Activated CD4-positive, alpha-beta memory T cell treated with anti-CD3 and anti-CD28 coated beads, Interleukin-2, amount 10 ng/mL, durations not matched to agents 7 days and 5 days (primary cell): ENCODE measurements at regions of chr3 and their contacts with region 1.

Region 1: GRCh38 chr3:187745201-187746058 is at the start of gene BCL6:
- DNase-seq: peak; percentile 91
- H3K4me3 Mint-ChIP-seq: peak within 1 kb of the TSS; percentile 89
- H3K27ac Mint-ChIP-seq: peak within 1 kb of the TSS; percentile 99
- H3K4me1 Mint-ChIP-seq: peaks cover 56% of the 10 kb centered on the region
- H3K27me3 Mint-ChIP-seq: no peaks in the 10 kb centered on the region
- total RNA-seq, gene BCL6: 30.4 to 33.4 TPM

Region 2: GRCh38 chr3:187594272-187594671 is 151.2 kb before region 1 on chr3:
- CTCF ChIA-PET with region 1: no interaction called
- POLR2A ChIA-PET with region 1: no interaction called
- DNase-seq: no peak
- H3K4me3 Mint-ChIP-seq: no peak overlapping the region
- H3K27ac Mint-ChIP-seq: no peak overlapping the region
- H3K4me1 Mint-ChIP-seq: no peaks in the 10 kb centered on the region
- H3K27me3 Mint-ChIP-seq: peaks cover 36% of the 10 kb centered on the region

Region 3: GRCh38 chr3:187640569-187641059 is 104.8 kb before region 1 on chr3:
- CTCF ChIA-PET with region 1: no interaction called
- POLR2A ChIA-PET with region 1: no interaction called
- DNase-seq: no peak
- H3K4me3 Mint-ChIP-seq: no peak overlapping the region
- H3K27ac Mint-ChIP-seq: no peak overlapping the region
- H3K4me1 Mint-ChIP-seq: no peaks in the 10 kb centered on the region
- H3K27me3 Mint-ChIP-seq: peaks cover 19% of the 10 kb centered on the region

Region 4: DNA sequence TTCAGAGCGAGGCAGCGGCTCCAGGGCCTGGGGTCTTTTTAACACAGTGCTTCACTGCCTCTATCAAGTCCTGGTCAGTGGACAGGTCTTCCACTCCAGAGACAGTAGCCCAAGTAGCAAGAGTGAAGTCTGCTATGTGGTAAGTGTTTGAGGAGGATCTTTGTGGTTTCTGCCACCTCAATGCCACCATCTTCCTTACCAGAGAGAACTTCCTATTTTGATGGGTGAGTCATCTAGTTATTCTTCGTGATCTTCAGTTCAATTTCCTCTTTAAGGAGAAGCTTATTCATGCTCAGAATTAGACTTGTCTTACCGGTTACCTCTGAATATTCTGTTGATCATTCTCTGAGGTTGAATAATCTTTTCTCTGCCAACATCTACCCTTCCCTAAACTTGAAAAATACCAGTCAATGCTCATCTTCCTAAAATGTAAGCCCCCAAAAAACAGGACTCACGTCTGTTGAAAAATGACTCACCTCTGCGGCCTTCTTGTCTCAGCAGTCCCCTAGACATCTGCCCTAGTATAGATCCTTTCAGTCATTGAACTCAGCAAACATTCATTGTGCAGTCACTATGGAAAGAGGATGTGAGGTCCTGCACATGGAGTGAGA is 32.0 kb after region 1 on chr3:
- CTCF ChIA-PET with region 1: interaction called, 8 read pairs
- POLR2A ChIA-PET with region 1: interaction called, 28 read pairs
- DNase-seq: peak; percentile 75
- H3K4me3 Mint-ChIP-seq: peak overlapping the region; percentile 55
- H3K27ac Mint-ChIP-seq: peak overlapping the region; percentile 95
- H3K4me1 Mint-ChIP-seq: peaks cover 58% of the 10 kb centered on the region
- H3K27me3 Mint-ChIP-seq: no peaks in the 10 kb centered on the region

Region 5: DNA sequence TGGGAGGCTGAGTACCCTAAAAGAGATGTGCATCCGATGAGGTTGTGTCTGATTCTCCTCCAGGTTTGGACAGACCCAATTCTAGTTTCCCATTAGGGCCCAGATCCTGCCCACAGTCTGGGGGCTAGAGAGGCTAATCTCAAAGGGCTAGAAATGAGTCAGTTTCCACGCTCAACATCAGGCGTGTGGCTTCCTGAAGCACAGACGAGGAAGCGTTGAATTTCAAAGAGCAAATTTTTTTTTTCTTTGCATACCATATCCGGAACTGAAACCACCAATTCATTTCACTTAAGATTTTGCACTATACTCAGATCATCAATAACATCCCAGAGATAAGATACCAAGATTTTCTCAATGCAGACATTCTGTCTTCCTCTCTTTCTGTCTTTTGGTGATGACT is 173.6 kb after region 1 on chr3:
- CTCF ChIA-PET with region 1: interaction called, 5 read pairs
- POLR2A ChIA-PET with region 1: interaction called, 11 read pairs
- DNase-seq: peak; percentile 76
- H3K4me3 Mint-ChIP-seq: peak overlapping the region; percentile 61
- H3K27ac Mint-ChIP-seq: peak overlapping the region; percentile 84
- H3K4me1 Mint-ChIP-seq: peaks cover 66% of the 10 kb centered on the region
- H3K27me3 Mint-ChIP-seq: peaks cover 17% of the 10 kb centered on the region

Region 6: DNA sequence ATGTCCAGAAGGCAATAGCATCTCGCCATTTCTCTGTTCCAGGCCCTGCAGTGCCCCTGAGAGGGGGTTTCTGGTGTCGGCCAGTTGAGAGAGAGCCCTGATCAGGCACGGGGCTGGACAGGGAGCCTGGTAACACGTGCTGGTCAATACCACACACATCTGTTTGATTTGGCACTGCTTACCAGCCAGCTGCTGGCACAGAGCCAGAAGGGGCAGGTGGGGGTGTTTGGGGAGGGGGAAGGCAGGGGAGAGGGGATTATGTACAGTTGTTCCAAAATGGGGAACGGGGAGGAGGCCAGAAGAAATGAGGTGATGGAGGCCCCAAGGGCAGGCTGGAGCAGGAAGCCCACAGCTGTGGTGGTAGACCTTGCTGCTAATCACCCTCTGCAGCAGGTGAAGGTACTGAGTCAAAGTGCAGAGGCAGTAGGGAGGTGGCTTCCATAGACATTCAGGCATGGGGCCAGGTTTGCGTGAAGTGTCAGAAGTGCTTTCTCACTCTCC is 255.0 kb after region 1 on chr3:
- CTCF ChIA-PET with region 1: interaction called, 25 read pairs
- POLR2A ChIA-PET with region 1: interaction called, 73 read pairs
- DNase-seq: peak; percentile 29
- H3K4me3 Mint-ChIP-seq: peak overlapping the region; percentile 72
- H3K27ac Mint-ChIP-seq: peak overlapping the region; percentile 99
- H3K4me1 Mint-ChIP-seq: peaks cover 74% of the 10 kb centered on the region
- H3K27me3 Mint-ChIP-seq: no peaks in the 10 kb centered on the region

Region 7: GRCh38 chr3:188154014-188154808 is 408.8 kb after region 1 on chr3 and contains the start of gene LPP:
- CTCF ChIA-PET with region 1: interaction called, 51 read pairs
- POLR2A ChIA-PET with region 1: interaction called, 136 read pairs
- DNase-seq: peak; percentile 90
- H3K4me3 Mint-ChIP-seq: peak within 1 kb of the TSS; percentile 93
- H3K27ac Mint-ChIP-seq: peak within 1 kb of the TSS; percentile 95
- H3K4me1 Mint-ChIP-seq: peaks cover 61% of the 10 kb centered on the region
- H3K27me3 Mint-ChIP-seq: no peaks in the 10 kb centered on the region
- total RNA-seq, gene LPP: 51.4 to 52.4 TPM

Region 8: GRCh38 chr3:189148081-189148507 is 1402.7 kb after region 1 on chr3:
- CTCF ChIA-PET with region 1: interaction called, 167 read pairs
- POLR2A ChIA-PET with region 1: interaction called, 13 read pairs
- DNase-seq: peak; percentile 75
- H3K4me3 Mint-ChIP-seq: no peak overlapping the region
- H3K27ac Mint-ChIP-seq: no peak overlapping the region
- H3K4me1 Mint-ChIP-seq: peaks cover 42% of the 10 kb centered on the region
- H3K27me3 Mint-ChIP-seq: no peaks in the 10 kb centered on the region